SK-N-SH (cell line): ENCODE measurements at regions of chr7 and their contacts with region 1.

Region 1: DNA sequence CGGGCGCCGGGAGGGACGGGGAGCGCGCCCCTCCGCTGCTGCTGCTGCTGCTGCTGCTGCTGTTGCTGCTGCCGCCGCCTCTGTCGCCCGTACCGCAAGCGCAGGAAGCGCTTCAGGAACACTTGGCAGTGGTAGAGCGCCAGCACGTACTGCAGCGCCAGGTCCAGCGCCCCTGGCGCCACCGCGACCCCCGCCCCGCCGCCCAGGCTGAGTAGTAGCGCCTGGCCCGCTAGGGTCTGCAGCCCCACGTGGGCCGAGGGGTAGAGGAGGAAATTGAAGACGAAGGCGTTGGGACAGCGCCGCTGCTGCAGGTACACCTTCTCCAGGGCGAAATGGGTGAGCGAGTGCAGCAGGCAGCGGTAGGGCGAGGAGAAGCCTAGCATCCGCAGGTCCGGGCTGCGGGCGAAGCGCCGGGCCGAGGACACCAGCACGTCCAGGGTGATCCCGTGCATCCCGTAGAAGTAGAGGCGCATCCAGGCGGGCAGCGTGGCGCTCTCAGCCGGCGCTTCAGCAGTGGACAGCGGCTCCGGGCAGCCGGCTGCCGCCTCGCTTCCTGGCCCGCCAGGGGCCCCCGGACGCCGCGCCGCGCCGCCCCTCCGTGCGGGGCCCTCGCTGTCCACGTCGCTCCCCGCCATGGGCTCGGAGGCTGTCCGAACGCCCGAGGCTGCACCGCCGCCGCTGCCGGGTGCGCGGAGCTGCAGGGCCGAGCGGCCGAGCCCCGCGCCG is at the start of gene TMEM229A:
- DNase-seq: peak; percentile 88
- H3K4me3 ChIP-seq: peak within 1 kb of the TSS; percentile 61 to 66
- H3K27ac ChIP-seq: peak within 1 kb of the TSS in 1 of 2 experiments; percentile 90; a peak in 2 of 4 replicates
- H3K4me1 ChIP-seq: peaks cover 4 to 26% of the 10 kb centered on the region in 2 experiments; a peak in 3 of 4 replicates
- H3K27me3 ChIP-seq: peaks cover 43% of the 10 kb centered on the region
- CTCF ChIP-seq: no peak
- EP300 ChIP-seq: no peak
- RAD21 ChIP-seq: no peak
- polyA plus RNA-seq, gene TMEM229A: 0.35 and 0.88 TPM in 2 replicates

Region 2: DNA sequence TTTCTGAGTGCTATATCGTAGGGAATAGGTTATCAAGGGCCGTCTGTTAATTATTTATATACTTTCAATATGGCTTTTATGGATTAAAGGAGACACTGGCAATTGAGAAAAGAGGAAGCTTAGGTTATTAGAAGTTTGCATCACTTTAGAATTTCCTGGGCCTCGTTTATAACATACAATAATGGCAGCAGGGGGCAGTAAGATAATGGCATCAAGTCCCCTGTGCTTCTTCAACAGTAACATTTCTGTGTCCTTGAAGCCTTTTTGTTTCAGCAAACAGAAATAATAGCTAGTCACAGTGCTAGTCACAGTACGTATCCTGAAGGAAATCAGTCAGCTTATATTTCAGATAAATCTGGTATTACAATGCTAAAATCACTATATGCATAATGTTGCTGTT is 65.6 kb before region 1 on chr7:
- CTCF ChIA-PET with region 1: interaction called, 10 read pairs
- POLR2A ChIA-PET with region 1: interaction called, 3 read pairs
- DNase-seq: no peak
- H3K4me3 ChIP-seq: no peak overlapping the region; a peak in 1 of 4 replicates
- H3K27ac ChIP-seq: no peak overlapping the region
- H3K4me1 ChIP-seq: no peaks in the 10 kb centered on the region
- H3K27me3 ChIP-seq: no peaks in the 10 kb centered on the region
- CTCF ChIP-seq: peak; percentile 48
- EP300 ChIP-seq: no peak
- RAD21 ChIP-seq: peak; percentile 89

Region 3: GRCh38 chr7:123995617-123996326 is 36.8 kb before region 1 on chr7:
- CTCF ChIA-PET with region 1: no interaction called
- POLR2A ChIA-PET with region 1: no interaction called
- DNase-seq: no peak
- H3K4me3 ChIP-seq: no peak overlapping the region
- H3K27ac ChIP-seq: no peak overlapping the region
- H3K4me1 ChIP-seq: no peaks in the 10 kb centered on the region
- H3K27me3 ChIP-seq: no peaks in the 10 kb centered on the region
- CTCF ChIP-seq: no peak
- EP300 ChIP-seq: no peak
- RAD21 ChIP-seq: no peak

Region 4: DNA sequence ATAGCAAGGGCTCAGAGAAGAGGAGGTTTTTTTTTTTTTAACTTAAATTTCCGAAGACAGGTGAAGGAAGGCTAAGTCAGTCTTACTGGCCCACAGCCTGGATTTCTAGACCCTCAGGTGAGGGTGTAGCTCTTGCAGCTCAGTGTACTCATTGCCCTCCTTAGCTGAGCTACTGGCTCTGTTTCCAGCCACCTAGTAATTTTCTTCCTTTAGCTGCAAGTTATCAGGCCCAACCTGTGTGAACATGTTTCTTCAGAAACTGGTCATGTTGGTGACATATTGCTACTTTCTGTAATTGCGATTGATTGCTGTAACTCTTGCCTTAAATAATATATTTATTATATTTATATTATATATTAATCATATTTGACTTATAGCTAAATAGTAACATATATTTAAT is 10.3 kb after region 1 on chr7:
- CTCF ChIA-PET with region 1: interaction called, 7 read pairs
- POLR2A ChIA-PET with region 1: interaction called, 15 read pairs
- DNase-seq: no peak
- H3K4me3 ChIP-seq: no peak overlapping the region
- H3K27ac ChIP-seq: no peak overlapping the region
- H3K4me1 ChIP-seq: peaks cover 0 to 9% of the 10 kb centered on the region in 2 experiments; a peak in 2 of 4 replicates
- H3K27me3 ChIP-seq: no peaks in the 10 kb centered on the region
- CTCF ChIP-seq: no peak
- EP300 ChIP-seq: no peak
- RAD21 ChIP-seq: no peak

Region 5: GRCh38 chr7:124072603-124073309 is 40.2 kb after region 1 on chr7:
- CTCF ChIA-PET with region 1: interaction called, 4 read pairs
- POLR2A ChIA-PET with region 1: interaction called, 17 read pairs
- DNase-seq: no peak
- H3K4me3 ChIP-seq: no peak overlapping the region
- H3K27ac ChIP-seq: peak overlapping the region; percentile 21 to 97; a peak in 3 of 4 replicates
- H3K4me1 ChIP-seq: peaks cover 14 to 44% of the 10 kb centered on the region in 2 experiments; a peak in 3 of 4 replicates
- H3K27me3 ChIP-seq: no peaks in the 10 kb centered on the region
- CTCF ChIP-seq: no peak
- EP300 ChIP-seq: no peak
- RAD21 ChIP-seq: no peak

Region 6: GRCh38 chr7:124085179-124085578 is 52.6 kb after region 1 on chr7:
- CTCF ChIA-PET with region 1: interaction called, 27 read pairs
- POLR2A ChIA-PET with region 1: interaction called, 84 read pairs
- DNase-seq: peak; percentile 41
- H3K4me3 ChIP-seq: peak overlapping the region in 1 of 2 experiments; percentile 0; a peak in 1 of 4 replicates
- H3K27ac ChIP-seq: peak overlapping the region; percentile 47 to 98; a peak in 3 of 4 replicates
- H3K4me1 ChIP-seq: peaks cover 24 to 46% of the 10 kb centered on the region in 2 experiments
- H3K27me3 ChIP-seq: no peaks in the 10 kb centered on the region
- CTCF ChIP-seq: no peak
- EP300 ChIP-seq: peak; percentile 46 to 99; a peak in 3 of 4 replicates
- RAD21 ChIP-seq: peak; percentile 29